Activated CD4-positive, alpha-beta T cell treated with anti-CD3 and anti-CD28 coated beads for 36 hours (primary cell): ENCODE measurements at regions of chr12 and their contacts with region 1.

Region 1: DNA sequence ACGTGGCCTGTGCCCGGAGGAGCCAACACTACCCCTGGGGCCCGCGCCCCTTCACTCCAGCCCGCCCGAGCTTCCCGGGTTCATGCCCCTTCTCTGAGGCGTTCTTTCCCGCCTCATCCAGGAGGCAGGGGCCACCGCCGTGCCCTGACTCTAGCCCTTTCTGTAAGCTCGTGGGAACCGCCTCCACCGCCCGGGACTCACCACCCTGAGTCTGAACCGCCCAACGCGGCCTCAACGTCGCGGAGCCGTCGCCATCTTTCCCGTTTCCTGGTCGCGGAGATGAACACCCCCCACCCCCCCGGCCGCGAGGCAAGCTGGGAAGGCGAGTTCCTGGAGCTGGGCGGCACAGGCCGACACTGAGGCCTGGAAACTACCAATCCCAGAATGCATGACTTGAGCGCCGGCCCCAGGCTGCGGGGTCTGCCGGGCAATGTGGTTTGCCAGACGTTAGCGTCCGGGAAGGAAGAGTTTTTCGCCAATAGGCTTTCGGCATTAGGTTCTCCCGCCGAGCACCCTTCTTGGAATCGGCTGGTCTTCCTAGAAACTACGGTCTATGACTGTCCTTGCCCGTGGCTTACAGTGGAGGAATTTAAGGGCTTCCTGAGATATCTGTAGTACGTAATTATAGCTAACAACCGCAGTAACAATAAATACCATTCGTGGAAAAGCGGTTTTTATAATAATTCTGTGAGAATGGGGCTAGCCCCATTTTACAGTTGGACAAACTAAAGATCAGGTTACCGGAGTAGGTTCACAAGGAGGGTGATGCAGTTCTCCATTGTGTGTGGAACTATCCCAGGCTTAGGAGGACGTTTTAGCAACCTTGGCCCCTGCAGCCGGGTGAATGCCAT is at the start of gene DDX23:
- DNase-seq: peak; percentile 96
- ATAC-seq: peak; percentile 97
- H3K4me3 Mint-ChIP-seq: peak within 1 kb of the TSS; percentile 96
- H3K27ac Mint-ChIP-seq: peak within 1 kb of the TSS; percentile 99
- H3K4me1 Mint-ChIP-seq: peaks cover 30% of the 10 kb centered on the region
- H3K27me3 Mint-ChIP-seq: no peaks in the 10 kb centered on the region
- total RNA-seq, gene DDX23: 115 to 120 TPM

Region 2: GRCh38 chr12:48758221-48758620 is 93.9 kb before region 1 on chr12:
- CTCF ChIA-PET with region 1: interaction called, 13 read pairs
- POLR2A ChIA-PET with region 1: no interaction called
- intact Hi-C with region 1: no loop called
- DNase-seq: no peak
- ATAC-seq: no peak
- H3K4me3 Mint-ChIP-seq: no peak overlapping the region
- H3K27ac Mint-ChIP-seq: no peak overlapping the region
- H3K4me1 Mint-ChIP-seq: peaks cover 2% of the 10 kb centered on the region
- H3K27me3 Mint-ChIP-seq: peaks cover 2% of the 10 kb centered on the region

Region 3: GRCh38 chr12:48882315-48882687 is 30.2 kb after region 1 on chr12:
- CTCF ChIA-PET with region 1: interaction called, 17 read pairs
- POLR2A ChIA-PET with region 1: interaction called, 4 read pairs
- intact Hi-C with region 1: no loop called
- DNase-seq: no peak
- ATAC-seq: no peak
- H3K4me3 Mint-ChIP-seq: no peak overlapping the region
- H3K27ac Mint-ChIP-seq: no peak overlapping the region
- H3K4me1 Mint-ChIP-seq: peaks cover 7% of the 10 kb centered on the region
- H3K27me3 Mint-ChIP-seq: peaks cover 22% of the 10 kb centered on the region

Region 4: DNA sequence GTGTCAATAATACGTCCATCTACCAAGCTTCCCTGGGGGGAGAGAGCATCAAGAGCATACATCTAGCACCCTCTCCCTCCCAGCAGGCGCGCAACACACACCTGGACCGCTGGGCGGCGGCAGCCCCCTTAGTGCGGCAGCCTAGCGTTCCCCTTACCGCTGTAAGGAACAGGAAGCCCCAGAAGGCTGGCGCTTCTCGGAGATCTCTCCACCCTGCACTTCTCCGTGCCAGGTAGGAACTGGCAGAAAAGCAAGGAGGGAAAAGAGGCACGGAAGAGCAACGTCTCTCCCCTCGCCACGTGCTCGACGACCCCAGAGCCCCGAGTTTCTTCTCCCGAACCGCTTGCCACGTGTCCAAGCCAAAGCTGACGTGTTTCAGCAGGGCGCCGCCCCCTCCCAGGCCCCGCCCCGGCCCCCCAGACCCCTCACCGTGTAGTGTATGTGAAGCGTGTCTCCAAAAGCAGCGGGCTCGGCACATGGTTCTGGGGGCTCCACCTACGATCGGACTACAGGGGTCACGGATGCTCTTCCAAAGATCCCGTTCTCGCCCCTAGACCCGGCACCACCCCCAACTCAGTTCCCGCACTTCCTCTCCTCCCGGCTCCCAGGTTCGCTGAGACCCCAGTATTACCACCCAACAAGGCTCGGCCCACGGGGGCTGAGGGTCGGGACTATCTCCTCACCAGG is 72.7 kb after region 1 on chr12:
- CTCF ChIA-PET with region 1: interaction called, 23 read pairs
- POLR2A ChIA-PET with region 1: interaction called, 10 read pairs
- intact Hi-C with region 1: loop called (anchors 2 kb)
- DNase-seq: peak; percentile 85
- ATAC-seq: peak; percentile 75
- H3K4me3 Mint-ChIP-seq: peak overlapping the region; percentile 83
- H3K27ac Mint-ChIP-seq: peak overlapping the region; percentile 93
- H3K4me1 Mint-ChIP-seq: peaks cover 52% of the 10 kb centered on the region
- H3K27me3 Mint-ChIP-seq: no peaks in the 10 kb centered on the region

Region 5: GRCh38 chr12:48977315-48978281 is 125.5 kb after region 1 on chr12:
- CTCF ChIA-PET with region 1: interaction called, 63 read pairs
- POLR2A ChIA-PET with region 1: no interaction called
- intact Hi-C with region 1: loop called (anchors 1 to 2 kb)
- DNase-seq: peak; percentile 92
- ATAC-seq: peak; percentile 69
- H3K4me3 Mint-ChIP-seq: peak overlapping the region; percentile 42
- H3K27ac Mint-ChIP-seq: peak overlapping the region; percentile 10
- H3K4me1 Mint-ChIP-seq: peaks cover 54% of the 10 kb centered on the region
- H3K27me3 Mint-ChIP-seq: peaks cover 73% of the 10 kb centered on the region

Region 6: GRCh38 chr12:49060237-49061156 is 208.4 kb after region 1 on chr12 and contains the start of gene KMT2D:
- CTCF ChIA-PET with region 1: interaction called, 5 read pairs
- POLR2A ChIA-PET with region 1: no interaction called
- intact Hi-C with region 1: loop called in 1 of 2 experiments (anchors 1 kb)
- DNase-seq: peak; percentile 94
- ATAC-seq: peak; percentile 75
- H3K4me3 Mint-ChIP-seq: peak within 1 kb of the TSS; percentile 98
- H3K27ac Mint-ChIP-seq: peak within 1 kb of the TSS; percentile 95
- H3K4me1 Mint-ChIP-seq: peaks cover 45% of the 10 kb centered on the region
- H3K27me3 Mint-ChIP-seq: no peaks in the 10 kb centered on the region
- total RNA-seq, gene KMT2D: 48.3 to 58.2 TPM